CD14-positive monocyte (primary cell): ENCODE measurements at regions of chr19 and their contacts with region 1.

Region 1: DNA sequence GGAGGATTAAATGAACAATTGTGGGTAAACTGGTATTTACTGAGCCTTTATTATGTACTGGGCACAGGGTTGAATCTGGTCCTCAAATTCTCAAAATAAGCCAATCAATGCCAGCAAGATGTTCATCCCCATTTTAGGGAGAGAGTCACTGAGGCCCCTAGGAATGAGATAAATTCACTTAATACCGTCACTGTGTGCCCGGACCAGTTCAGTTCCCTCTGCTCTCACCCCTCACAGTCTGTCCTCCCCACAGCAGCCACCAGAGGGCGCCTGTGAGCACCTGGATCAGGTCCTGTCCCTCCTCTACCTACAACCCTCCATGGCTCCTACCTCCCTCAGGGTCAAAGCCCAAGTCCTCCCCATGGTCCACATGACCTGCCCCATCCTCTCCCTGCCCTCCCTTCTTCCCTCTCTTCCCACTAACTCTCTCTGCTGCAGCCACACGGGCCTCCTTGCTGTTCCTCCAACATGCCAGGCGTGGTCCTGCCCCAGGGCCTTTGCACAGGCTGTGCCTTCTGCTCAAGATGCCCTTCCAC is 42.0 kb upstream of the NFIC start:
- DNase-seq: peak; percentile 34 to 58 (median 36)
- H3K4me3 ChIP-seq: no peak overlapping the region
- H3K4me3 Mint-ChIP-seq: no peak overlapping the region
- H3K27ac ChIP-seq: no peak overlapping the region
- H3K27ac Mint-ChIP-seq: no peak overlapping the region
- H3K4me1 ChIP-seq: no peaks in the 10 kb centered on the region
- H3K4me1 Mint-ChIP-seq: no peaks in the 10 kb centered on the region
- H3K27me3 ChIP-seq: no peaks in the 10 kb centered on the region
- H3K27me3 Mint-ChIP-seq: peaks cover 4 to 13% (median 11%) of the 10 kb centered on the region in 3 donors
- CTCF ChIP-seq: peak; percentile 81

Region 2: GRCh38 chr19:3429581-3430080 is 105.2 kb after region 1 on chr19:
- intact Hi-C with region 1: loop called (anchors 1 to 2 kb)
- DNase-seq: peak; percentile 55 to 66 (median 63)
- H3K4me3 ChIP-seq: peak overlapping the region in 1 of 3 experiments; percentile 39
- H3K4me3 Mint-ChIP-seq: no peak overlapping the region
- H3K27ac ChIP-seq: peak overlapping the region; percentile 32 to 51
- H3K27ac Mint-ChIP-seq: peak overlapping the region in 4 of 7 donors; percentile 30 to 78 (median 60)
- H3K4me1 ChIP-seq: peaks cover 24 to 29% of the 10 kb centered on the region in 2 donors
- H3K4me1 Mint-ChIP-seq: peaks cover 35% of the 10 kb centered on the region
- H3K27me3 ChIP-seq: no peaks in the 10 kb centered on the region
- H3K27me3 Mint-ChIP-seq: peaks cover 0 to 1% (median 0%) of the 10 kb centered on the region in 3 donors
- CTCF ChIP-seq: peak; percentile 99

Region 3: GRCh38 chr19:3471954-3472655 is 147.7 kb after region 1 on chr19:
- intact Hi-C with region 1: loop called in 1 of 2 experiments (anchors 5 kb)
- DNase-seq: peak in 1 of 3 donors; percentile 36
- H3K4me3 ChIP-seq: no peak overlapping the region
- H3K4me3 Mint-ChIP-seq: no peak overlapping the region
- H3K27ac ChIP-seq: no peak overlapping the region
- H3K27ac Mint-ChIP-seq: no peak overlapping the region
- H3K4me1 ChIP-seq: no peaks in the 10 kb centered on the region
- H3K4me1 Mint-ChIP-seq: peaks cover 2% of the 10 kb centered on the region
- H3K27me3 ChIP-seq: no peaks in the 10 kb centered on the region
- H3K27me3 Mint-ChIP-seq: peaks cover 3 to 6% (median 4%) of the 10 kb centered on the region in 3 donors
- CTCF ChIP-seq: peak; percentile 79

Region 4: DNA sequence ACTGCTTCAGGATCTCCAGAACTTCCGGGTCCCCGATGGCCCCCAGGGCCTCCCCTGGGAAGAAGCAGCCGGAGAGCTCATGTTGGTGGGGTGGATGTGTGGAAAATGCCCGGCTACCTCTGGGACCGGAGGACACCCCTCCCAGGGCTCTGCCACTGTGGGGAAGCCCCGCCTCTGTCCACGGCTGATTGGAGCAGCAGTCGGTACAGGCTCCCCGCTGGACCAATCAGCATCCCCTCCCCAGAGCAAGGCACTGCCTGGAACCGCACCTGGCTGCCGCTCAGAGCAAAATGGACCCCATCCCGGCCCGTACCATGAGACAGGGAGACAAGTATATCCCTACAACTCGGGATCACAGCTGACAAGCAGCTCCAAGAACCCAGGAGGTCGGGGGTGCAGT is 169.7 kb after region 1 on chr19:
- intact Hi-C with region 1: loop called (anchors 5 kb)
- DNase-seq: no peak
- H3K4me3 ChIP-seq: no peak overlapping the region
- H3K4me3 Mint-ChIP-seq: no peak overlapping the region
- H3K27ac ChIP-seq: no peak overlapping the region
- H3K27ac Mint-ChIP-seq: no peak overlapping the region
- H3K4me1 ChIP-seq: no peaks in the 10 kb centered on the region
- H3K4me1 Mint-ChIP-seq: peaks cover 1% of the 10 kb centered on the region
- H3K27me3 ChIP-seq: no peaks in the 10 kb centered on the region
- H3K27me3 Mint-ChIP-seq: peaks cover 1 to 3% (median 2%) of the 10 kb centered on the region in 3 donors
- CTCF ChIP-seq: no peak

Region 5: DNA sequence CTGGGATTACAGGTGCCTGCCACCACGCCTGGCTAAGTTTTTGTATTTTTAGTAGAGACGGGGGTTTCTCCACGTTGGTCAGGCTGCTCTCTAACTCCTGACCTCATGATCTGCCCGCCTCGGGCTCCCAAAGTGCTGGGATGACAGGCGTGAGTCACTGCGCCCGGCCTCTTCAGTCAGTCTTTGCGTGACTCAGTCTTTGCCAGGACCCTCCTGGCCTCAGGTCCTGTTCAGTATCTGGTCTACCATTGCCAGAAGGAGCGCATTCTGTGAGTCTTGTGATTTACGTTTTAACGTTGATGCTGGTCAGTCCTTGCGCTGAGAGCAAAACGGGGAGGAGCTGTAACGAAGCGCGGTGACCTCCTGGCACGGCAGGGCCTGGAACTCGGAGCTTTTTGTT is 240.8 kb after region 1 on chr19:
- intact Hi-C with region 1: no loop called
- DNase-seq: no peak
- H3K4me3 ChIP-seq: no peak overlapping the region
- H3K4me3 Mint-ChIP-seq: no peak overlapping the region
- H3K27ac ChIP-seq: no peak overlapping the region
- H3K27ac Mint-ChIP-seq: no peak overlapping the region
- H3K4me1 ChIP-seq: peaks cover 0 to 9% of the 10 kb centered on the region in 2 donors
- H3K4me1 Mint-ChIP-seq: peaks cover 10% of the 10 kb centered on the region
- H3K27me3 ChIP-seq: no peaks in the 10 kb centered on the region
- H3K27me3 Mint-ChIP-seq: peaks cover 0 to 10% (median 5%) of the 10 kb centered on the region in 3 donors
- CTCF ChIP-seq: no peak